ENCODE measurements at regions of chr21 and their contacts with region 1.

Region 1: DNA sequence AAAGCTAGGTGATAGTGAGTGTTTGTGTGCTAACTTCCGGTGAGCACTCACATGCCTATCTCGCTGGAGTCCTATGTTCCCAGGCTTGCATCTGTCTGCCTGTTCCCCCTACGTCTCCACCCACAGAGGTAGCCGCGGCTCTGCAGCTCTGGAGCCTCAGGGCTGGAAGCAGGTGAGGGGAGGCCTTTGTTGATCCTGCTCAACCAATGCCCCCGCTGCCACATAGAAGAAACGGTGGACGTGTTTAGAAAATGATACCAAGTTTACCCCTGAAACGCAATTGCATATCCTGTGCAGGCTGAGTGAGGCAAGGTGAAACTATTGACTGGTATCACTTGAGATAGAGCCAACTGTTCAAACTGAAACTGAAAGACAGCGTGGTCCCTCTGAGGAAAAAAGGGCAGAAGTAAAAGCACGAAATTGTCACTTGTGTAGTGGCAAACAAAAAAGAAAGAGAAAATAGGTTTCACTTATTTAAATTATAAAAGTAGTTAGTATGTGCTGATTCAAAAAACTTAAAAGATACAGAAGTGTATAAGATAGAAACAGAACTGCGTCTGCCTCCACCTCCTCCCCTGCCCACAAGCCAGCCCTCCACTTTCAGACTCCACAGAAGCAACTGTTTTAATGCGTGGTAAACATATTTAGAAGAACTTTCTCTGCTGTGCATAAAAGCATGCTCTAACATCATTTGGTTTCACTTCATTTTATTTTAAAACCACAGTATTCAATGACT is 38.6 kb upstream of the ETS2 start:
- DNase-seq: peak; percentile 93
- H3K4me3 Mint-ChIP-seq: peak overlapping the region; percentile 81
- H3K27ac Mint-ChIP-seq: peak overlapping the region; percentile 93
- H3K4me1 Mint-ChIP-seq: peaks cover 33% of the 10 kb centered on the region
- H3K27me3 Mint-ChIP-seq: no peaks in the 10 kb centered on the region

Region 2: GRCh38 chr21:38244885-38245545 is 522.1 kb before region 1 on chr21:
- intact Hi-C with region 1: loop called (anchors 10 kb)
- DNase-seq: peak; percentile 88
- H3K4me3 Mint-ChIP-seq: peak overlapping the region; percentile 38
- H3K27ac Mint-ChIP-seq: peak overlapping the region; percentile 89
- H3K4me1 Mint-ChIP-seq: peaks cover 30% of the 10 kb centered on the region
- H3K27me3 Mint-ChIP-seq: peaks cover 7% of the 10 kb centered on the region

Region 3: GRCh38 chr21:38699048-38699447 is 68.1 kb before region 1 on chr21:
- intact Hi-C with region 1: no loop called
- DNase-seq: no peak
- H3K4me3 Mint-ChIP-seq: no peak overlapping the region
- H3K27ac Mint-ChIP-seq: no peak overlapping the region
- H3K4me1 Mint-ChIP-seq: no peaks in the 10 kb centered on the region
- H3K27me3 Mint-ChIP-seq: peaks cover 6% of the 10 kb centered on the region

Region 4: GRCh38 chr21:38733973-38734546 is 33.1 kb before region 1 on chr21:
- intact Hi-C with region 1: loop called (anchors 2 kb)
- DNase-seq: peak; percentile 92
- H3K4me3 Mint-ChIP-seq: peak overlapping the region; percentile 83
- H3K27ac Mint-ChIP-seq: no peak overlapping the region
- H3K4me1 Mint-ChIP-seq: peaks cover 14% of the 10 kb centered on the region
- H3K27me3 Mint-ChIP-seq: peaks cover 33% of the 10 kb centered on the region

Region 5: DNA sequence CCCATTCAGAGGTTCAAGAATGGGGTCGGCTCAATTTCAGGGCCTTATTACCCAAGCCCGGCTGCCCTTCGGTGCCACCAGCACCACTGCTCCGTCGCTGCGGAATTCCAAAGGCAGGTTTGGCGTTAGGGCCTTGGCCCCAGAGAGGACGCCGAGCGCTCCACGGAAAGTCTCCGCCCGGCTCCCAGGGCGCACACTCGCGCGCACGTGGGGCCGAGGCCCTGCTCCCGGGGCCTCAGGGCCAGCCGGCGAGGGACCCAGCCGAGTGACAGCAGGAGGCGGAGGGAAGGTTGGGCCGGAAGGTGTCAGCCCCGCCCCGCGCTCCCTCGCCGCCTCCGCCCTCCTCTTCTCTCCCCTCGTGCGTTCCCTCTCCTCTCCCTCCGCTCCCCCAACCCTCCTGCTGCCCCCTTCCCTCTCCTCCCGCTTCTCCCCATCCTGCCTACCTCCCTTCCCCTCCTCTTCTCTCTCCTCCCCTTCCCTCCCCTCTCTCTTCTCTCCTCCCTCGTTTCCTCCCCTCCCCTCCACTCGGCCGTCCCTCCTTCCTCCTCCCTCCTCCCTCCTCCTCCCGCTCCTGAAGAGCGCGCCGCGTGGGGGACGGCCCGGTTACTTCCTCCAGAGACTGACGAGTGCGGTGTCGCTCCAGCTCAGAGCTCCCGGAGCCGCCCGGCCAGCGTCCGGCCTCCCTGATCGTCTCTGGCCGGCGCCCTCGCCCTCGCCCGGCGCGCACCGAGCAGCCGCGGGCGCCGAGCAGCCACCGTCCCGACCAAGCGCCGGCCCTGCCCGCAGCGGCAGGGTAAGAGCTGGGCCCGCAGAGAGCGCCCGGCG is 38.4 kb after region 1 on chr21 and contains the start of gene ETS2:
- intact Hi-C with region 1: loop called (anchors 1 kb)
- DNase-seq: peak; percentile 93
- H3K4me3 Mint-ChIP-seq: peak within 1 kb of the TSS; percentile 86
- H3K27ac Mint-ChIP-seq: peak within 1 kb of the TSS; percentile 95
- H3K4me1 Mint-ChIP-seq: peaks cover 29% of the 10 kb centered on the region
- H3K27me3 Mint-ChIP-seq: peaks cover 6% of the 10 kb centered on the region
- total RNA-seq, gene ETS2: 28.6 and 30.4 TPM in 2 replicates

Region 6: GRCh38 chr21:38958940-38959691 is 192.0 kb after region 1 on chr21:
- intact Hi-C with region 1: loop called (anchors 1 kb)
- DNase-seq: peak; percentile 64
- H3K4me3 Mint-ChIP-seq: peak overlapping the region; percentile 67
- H3K27ac Mint-ChIP-seq: peak overlapping the region; percentile 95
- H3K4me1 Mint-ChIP-seq: peaks cover 29% of the 10 kb centered on the region
- H3K27me3 Mint-ChIP-seq: no peaks in the 10 kb centered on the region

Region 7: GRCh38 chr21:39183237-39184007 is 416.3 kb after region 1 on chr21 and contains the start of gene PSMG1:
- intact Hi-C with region 1: loop called (anchors 10 kb)
- DNase-seq: peak; percentile 98
- H3K4me3 Mint-ChIP-seq: peak within 1 kb of the TSS; percentile 99
- H3K27ac Mint-ChIP-seq: peak within 1 kb of the TSS; percentile 98
- H3K4me1 Mint-ChIP-seq: peaks cover 47% of the 10 kb centered on the region
- H3K27me3 Mint-ChIP-seq: no peaks in the 10 kb centered on the region
- total RNA-seq, gene PSMG1: 99.7 and 105 TPM in 2 replicates

Measured in activated CD4-positive, alpha-beta T cell treated with anti-CD3 and anti-CD28 coated beads, Interleukin-2, amount 10 ng/mL, durations not matched to agents 24 days and 14 days (primary cell).